Breast epithelium (tissue), 4 donors: ENCODE measurements at regions of chr6 and their contacts with region 1.

Region 1: DNA sequence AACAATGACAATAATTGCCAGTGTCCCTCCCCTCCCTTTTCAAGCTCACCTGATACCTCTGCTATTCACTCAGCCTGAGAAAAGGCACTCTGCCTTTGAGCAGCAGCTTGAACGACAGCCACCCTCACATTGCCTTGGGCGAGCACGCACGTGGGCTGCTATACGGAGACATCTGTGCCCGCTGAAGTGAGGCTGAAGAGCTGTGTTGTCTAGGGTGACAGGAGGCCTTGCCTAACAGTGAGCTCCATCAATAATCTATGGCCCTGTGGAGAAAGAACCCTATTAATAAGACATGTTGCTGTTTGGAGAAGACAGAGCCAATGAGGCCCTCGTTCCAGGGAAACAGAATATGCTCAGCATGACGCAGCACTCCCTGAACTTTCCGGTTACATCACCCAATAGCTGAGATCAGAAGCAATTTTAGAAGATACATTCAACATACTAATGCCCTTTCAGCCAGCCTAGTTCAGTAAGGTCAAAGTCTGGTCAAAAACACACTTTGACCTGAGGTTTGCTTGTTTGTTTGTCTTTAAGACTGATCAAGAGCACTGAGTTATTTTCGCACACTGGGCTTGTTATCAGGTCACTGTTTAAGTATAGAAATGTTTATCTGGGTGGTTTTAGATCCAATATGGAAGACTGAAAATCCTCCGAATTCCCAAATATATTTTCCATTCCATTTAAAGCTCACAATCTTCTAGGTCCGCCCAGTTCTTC is 30.6 kb downstream of the RBM24 start:
- DNase-seq: no peak
- H3K4me3 ChIP-seq: no peak overlapping the region
- H3K27ac ChIP-seq: no peak overlapping the region
- H3K4me1 ChIP-seq: no peaks in the 10 kb centered on the region
- H3K27me3 ChIP-seq: no peaks in the 10 kb centered on the region
- CTCF ChIP-seq: no peak
- POLR2A ChIP-seq: no peak

Region 2: DNA sequence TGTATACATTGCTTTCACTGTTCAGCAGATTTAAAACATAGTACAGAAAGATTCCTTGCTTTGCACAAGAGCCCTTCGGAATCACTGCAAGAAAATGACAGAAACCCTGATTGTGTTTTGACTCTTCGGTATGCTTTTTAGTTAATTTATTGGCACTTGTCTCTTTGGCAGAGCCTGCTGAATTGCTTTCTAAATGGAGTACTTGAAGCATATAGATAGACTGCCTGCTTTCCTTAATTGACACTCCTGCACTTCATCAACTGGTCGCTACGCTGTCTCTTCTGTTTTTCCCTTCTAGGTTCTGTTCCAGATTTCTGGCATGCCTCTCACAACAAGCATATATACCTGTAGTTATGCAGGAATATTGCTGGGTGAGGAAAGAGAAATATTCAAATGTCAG is 53.0 kb before region 1 on chr6:
- intact Hi-C with region 1: loop called (anchors 2 kb)
- DNase-seq: no peak
- H3K4me3 ChIP-seq: no peak overlapping the region
- H3K27ac ChIP-seq: no peak overlapping the region
- H3K4me1 ChIP-seq: no peaks in the 10 kb centered on the region
- H3K27me3 ChIP-seq: no peaks in the 10 kb centered on the region
- CTCF ChIP-seq: no peak
- POLR2A ChIP-seq: no peak

Region 3: GRCh38 chr6:17281100-17281494 is 30.7 kb before region 1 on chr6 and contains the start of gene RBM24:
- intact Hi-C with region 1: no loop called
- DNase-seq: peak in 1 of 2 donors; percentile 66
- H3K4me3 ChIP-seq: peak within 1 kb of the TSS; percentile 69 to 83 (median 73)
- H3K27ac ChIP-seq: peak within 1 kb of the TSS; percentile 4 to 23
- H3K4me1 ChIP-seq: peaks cover 0 to 5% of the 10 kb centered on the region in 2 donors
- H3K27me3 ChIP-seq: no peaks in the 10 kb centered on the region
- CTCF ChIP-seq: peak in 2 of 3 donors; percentile 17 to 41
- POLR2A ChIP-seq: no peak
- total RNA-seq, gene RBM24: 1.3 to 2.5 (median 1.8) TPM

Region 4: DNA sequence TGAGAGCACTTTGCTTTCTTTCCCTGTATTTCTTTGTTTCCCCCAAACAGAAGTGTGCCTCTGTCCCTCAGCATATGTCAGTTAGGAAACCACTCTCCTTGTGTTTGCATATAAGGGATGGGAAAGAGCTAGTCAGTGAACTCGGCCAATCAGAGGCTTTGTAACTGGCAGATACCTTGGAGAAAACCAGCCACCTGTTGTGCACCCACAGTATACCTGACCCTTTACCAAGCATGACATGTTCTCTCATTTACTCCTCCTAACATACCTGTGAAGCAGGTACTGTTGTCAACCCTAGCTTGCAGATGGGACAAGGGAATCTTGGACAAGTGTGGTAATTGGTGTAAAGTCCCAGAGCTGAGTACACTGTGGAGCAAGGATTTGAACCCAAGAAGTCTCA is 192.3 kb after region 1 on chr6:
- intact Hi-C with region 1: loop called (anchors 5 kb)
- DNase-seq: no peak
- H3K4me3 ChIP-seq: no peak overlapping the region
- H3K27ac ChIP-seq: no peak overlapping the region
- H3K4me1 ChIP-seq: no peaks in the 10 kb centered on the region
- H3K27me3 ChIP-seq: no peaks in the 10 kb centered on the region
- CTCF ChIP-seq: no peak
- POLR2A ChIP-seq: no peak

Region 5: GRCh38 chr6:18362058-18362561 is 1050.4 kb after region 1 on chr6:
- intact Hi-C with region 1: no loop called
- DNase-seq: no peak
- H3K4me3 ChIP-seq: no peak overlapping the region
- H3K27ac ChIP-seq: peak overlapping the region; percentile 54 to 55
- H3K4me1 ChIP-seq: no peaks in the 10 kb centered on the region
- H3K27me3 ChIP-seq: no peaks in the 10 kb centered on the region
- CTCF ChIP-seq: no peak
- POLR2A ChIP-seq: no peak